Colonic mucosa (tissue), 4 donors: ENCODE measurements at regions of chr17 and their contacts with region 1.

Region 1: DNA sequence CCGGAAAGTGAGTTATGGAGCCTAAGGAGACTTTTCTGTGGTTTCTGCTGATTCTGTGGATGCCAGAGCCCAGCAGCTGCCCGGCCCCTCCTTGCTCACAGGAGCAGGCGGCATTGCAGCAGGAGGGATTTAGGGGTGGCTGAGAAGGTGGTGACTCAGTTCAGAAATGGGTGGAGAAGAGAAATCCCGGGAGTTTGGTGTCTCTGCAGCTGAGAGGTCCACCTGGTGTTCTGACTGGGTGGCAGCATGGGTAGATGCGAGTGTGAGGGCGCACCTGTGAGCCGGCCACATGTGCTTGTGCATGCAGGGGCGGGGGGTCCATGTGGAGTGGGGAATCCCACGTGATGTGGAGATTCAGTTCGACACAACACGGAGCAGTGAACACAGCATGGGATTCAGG is 16.1 kb upstream of the SPPL2C start:
- DNase-seq: no peak
- H3K4me3 ChIP-seq: no peak overlapping the region
- H3K27ac ChIP-seq: no peak overlapping the region
- H3K4me1 ChIP-seq: no peaks in the 10 kb centered on the region
- H3K27me3 ChIP-seq: no peaks in the 10 kb centered on the region
- CTCF ChIP-seq: no peak

Region 2: GRCh38 chr17:45640141-45640850 is 188.3 kb before region 1 on chr17:
- intact Hi-C with region 1: loop called (anchors 1 kb)
- DNase-seq: peak; percentile 62
- H3K4me3 ChIP-seq: no peak overlapping the region
- H3K27ac ChIP-seq: no peak overlapping the region
- H3K4me1 ChIP-seq: no peaks in the 10 kb centered on the region
- H3K27me3 ChIP-seq: no peaks in the 10 kb centered on the region
- CTCF ChIP-seq: peak; percentile 97

Region 3: GRCh38 chr17:45666046-45666600 is 162.5 kb before region 1 on chr17:
- intact Hi-C with region 1: no loop called
- DNase-seq: no peak
- H3K4me3 ChIP-seq: no peak overlapping the region
- H3K27ac ChIP-seq: no peak overlapping the region
- H3K4me1 ChIP-seq: no peaks in the 10 kb centered on the region
- H3K27me3 ChIP-seq: no peaks in the 10 kb centered on the region
- CTCF ChIP-seq: no peak